ENCODE measurements at regions of chr15 and their contacts with region 1.

Region 1: GRCh38 chr15:89052474-89052873 is 35.8 kb upstream of the ABHD2 start:
- DNase-seq: no peak
- H3K4me3 ChIP-seq: no peak overlapping the region
- H3K27ac ChIP-seq: no peak overlapping the region
- H3K4me1 ChIP-seq: peaks cover 1% of the 10 kb centered on the region
- H3K27me3 ChIP-seq: no peaks in the 10 kb centered on the region
- CTCF ChIP-seq: no peak
- EP300 ChIP-seq: no peak
- POLR2A ChIP-seq: no peak

Region 2: GRCh38 chr15:89113296-89114024 is 61.0 kb after region 1 on chr15:
- intact Hi-C with region 1: no loop called
- DNase-seq: no peak
- H3K4me3 ChIP-seq: no peak overlapping the region
- H3K27ac ChIP-seq: no peak overlapping the region
- H3K4me1 ChIP-seq: peaks cover 6% of the 10 kb centered on the region
- H3K27me3 ChIP-seq: no peaks in the 10 kb centered on the region
- CTCF ChIP-seq: no peak
- EP300 ChIP-seq: no peak
- POLR2A ChIP-seq: no peak

Region 3: GRCh38 chr15:89167267-89168176 is 115.0 kb after region 1 on chr15:
- intact Hi-C with region 1: loop called in 1 of 4 experiments (anchors 2 kb)
- DNase-seq: no peak
- H3K4me3 ChIP-seq: no peak overlapping the region
- H3K27ac ChIP-seq: no peak overlapping the region
- H3K4me1 ChIP-seq: peaks cover 5% of the 10 kb centered on the region
- H3K27me3 ChIP-seq: no peaks in the 10 kb centered on the region
- CTCF ChIP-seq: no peak
- EP300 ChIP-seq: no peak
- POLR2A ChIP-seq: no peak